Body of pancreas (tissue), 4 donors: ENCODE measurements at regions of chr7 and their contacts with region 1.

Region 1: GRCh38 chr7:76393116-76394031 is 16.1 kb downstream of the SSC4D start:
- DNase-seq: peak; percentile 94 to 96 (median 96)
- ATAC-seq: peak; percentile 92
- H3K4me3 ChIP-seq: peak overlapping the region; percentile 3 to 12
- H3K27ac ChIP-seq: peak overlapping the region; percentile 73 to 94 (median 86)
- H3K4me1 ChIP-seq: peaks cover 38% of the 10 kb centered on the region
- H3K27me3 ChIP-seq: no peaks in the 10 kb centered on the region
- CTCF ChIP-seq: peak in 1 of 7 experiments; percentile 11
- POLR2A ChIP-seq: peak; percentile 77 to 88 (median 80)

Region 2: DNA sequence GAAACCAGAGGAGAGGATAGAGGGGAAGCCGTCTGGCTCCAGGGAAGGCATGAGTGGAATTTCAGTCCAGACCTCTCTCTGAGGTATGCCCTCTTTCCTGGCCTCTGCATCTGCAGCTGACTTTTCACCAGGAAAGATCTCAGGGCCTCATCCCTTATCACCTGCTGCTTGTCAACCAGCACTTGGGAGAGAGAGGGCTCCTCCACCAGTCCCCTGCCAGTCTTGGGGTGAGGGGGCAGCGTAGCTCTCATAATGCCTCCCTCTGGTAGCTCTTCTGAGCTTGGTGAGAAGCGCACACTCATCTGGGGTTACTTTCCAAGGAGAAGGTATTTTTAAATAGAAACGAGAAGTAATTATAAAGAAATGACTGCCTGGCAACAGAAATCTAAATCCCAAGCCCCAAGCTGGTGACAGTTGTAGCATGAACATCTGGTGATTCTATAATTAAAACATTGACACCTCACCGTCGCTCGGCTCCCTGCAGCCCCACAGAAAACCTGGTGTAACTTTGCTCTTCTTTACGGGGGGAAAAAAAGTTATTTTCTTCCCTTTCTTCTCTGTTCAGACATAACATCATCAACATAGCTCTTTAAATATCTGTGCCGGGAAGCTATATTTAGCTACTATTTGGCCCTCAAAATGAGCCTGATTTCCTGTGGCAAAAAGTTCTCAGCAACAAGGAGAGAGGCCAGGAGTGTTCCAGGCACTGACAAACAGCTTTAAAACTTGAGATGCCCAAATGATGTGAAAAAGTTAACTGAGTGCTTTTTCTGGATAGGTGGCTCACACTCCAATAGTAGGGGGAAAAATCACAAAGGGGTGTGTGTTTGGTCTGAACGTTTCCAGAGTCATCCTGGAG is 681.5 kb before region 1 on chr7:
- intact Hi-C with region 1: no loop called
- DNase-seq: no peak
- ATAC-seq: no peak
- H3K4me3 ChIP-seq: no peak overlapping the region
- H3K27ac ChIP-seq: peak overlapping the region in 1 of 4 donors; percentile 9
- H3K4me1 ChIP-seq: no peaks in the 10 kb centered on the region
- H3K27me3 ChIP-seq: no peaks in the 10 kb centered on the region
- CTCF ChIP-seq: no peak
- POLR2A ChIP-seq: no peak

Region 3: GRCh38 chr7:76333511-76334101 is 59.8 kb before region 1 on chr7:
- intact Hi-C with region 1: no loop called
- DNase-seq: peak; percentile 50 to 72 (median 52)
- ATAC-seq: peak; percentile 80
- H3K4me3 ChIP-seq: no peak overlapping the region
- H3K27ac ChIP-seq: peak overlapping the region in 3 of 4 donors; percentile 46 to 69 (median 69)
- H3K4me1 ChIP-seq: peaks cover 67% of the 10 kb centered on the region
- H3K27me3 ChIP-seq: no peaks in the 10 kb centered on the region
- CTCF ChIP-seq: no peak
- POLR2A ChIP-seq: peak in 1 of 3 donors; percentile 9

Region 4: DNA sequence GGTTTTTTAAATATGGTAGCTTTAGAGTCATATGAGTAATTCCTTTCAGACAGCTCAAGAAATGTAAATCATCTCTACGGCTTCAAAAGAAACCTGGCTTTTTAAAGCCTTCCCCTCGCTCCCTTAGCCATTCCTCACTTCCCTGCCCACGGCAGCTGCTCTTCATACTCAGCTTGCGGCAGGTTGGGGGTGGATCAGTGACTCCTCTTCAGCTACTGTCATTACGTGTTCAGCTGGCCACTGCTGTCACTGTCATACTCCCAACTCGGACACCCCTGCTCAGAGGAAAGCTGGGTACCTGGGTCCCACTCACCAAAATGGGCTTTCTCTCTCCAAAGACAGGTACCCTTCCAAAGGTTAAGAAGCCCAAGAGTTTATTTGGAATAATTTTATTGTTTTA is 41.2 kb before region 1 on chr7:
- intact Hi-C with region 1: loop called (anchors 5 kb)
- DNase-seq: no peak
- ATAC-seq: no peak
- H3K4me3 ChIP-seq: no peak overlapping the region
- H3K27ac ChIP-seq: no peak overlapping the region
- H3K4me1 ChIP-seq: peaks cover 67% of the 10 kb centered on the region
- H3K27me3 ChIP-seq: no peaks in the 10 kb centered on the region
- CTCF ChIP-seq: no peak
- POLR2A ChIP-seq: no peak